Gastrocnemius medialis (tissue), 4 donors: ENCODE measurements at regions of chr7 and their contacts with region 1.

Region 1: GRCh38 chr7:150988230-150989226 is 2.3 kb upstream of the NOS3 start:
- DNase-seq: no peak
- ATAC-seq: peak; percentile 48 to 55
- H3K4me3 ChIP-seq: no peak overlapping the region
- H3K27ac ChIP-seq: peak overlapping the region in 3 of 4 donors; percentile 34 to 57 (median 35)
- H3K4me1 ChIP-seq: peaks cover 0 to 7% of the 10 kb centered on the region in 2 donors
- H3K27me3 ChIP-seq: peaks cover 0 to 3% (median 0%) of the 10 kb centered on the region in 3 donors
- CTCF ChIP-seq: peak; percentile 65 to 94 (median 83)
- POLR2A ChIP-seq: no peak

Region 2: DNA sequence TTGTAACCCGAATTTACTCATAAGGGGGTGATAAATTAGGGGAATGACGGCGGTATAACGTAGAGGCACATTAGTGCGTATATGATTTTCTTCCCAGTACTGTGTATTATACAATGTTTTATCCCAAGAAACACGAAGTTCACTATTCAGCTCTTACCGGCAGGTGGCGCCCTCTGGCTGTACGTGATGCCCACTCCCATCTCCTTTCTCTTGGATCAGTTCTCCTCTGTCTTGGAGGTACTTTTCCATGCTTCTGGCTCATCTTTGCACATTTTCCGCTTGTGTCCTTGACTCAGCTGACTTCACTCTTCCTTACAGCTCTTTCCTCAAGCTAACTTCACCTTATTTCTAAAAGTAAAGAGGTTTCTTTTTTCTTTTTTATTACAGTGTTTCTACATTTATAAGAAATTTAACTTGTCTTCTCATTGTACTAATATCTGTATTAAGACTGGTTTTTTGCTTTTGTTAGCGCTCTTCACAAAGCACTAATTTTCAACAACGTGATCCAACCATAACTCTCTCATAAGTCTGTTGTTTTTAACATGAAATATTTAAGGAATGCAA is 209.7 kb before region 1 on chr7:
- in situ Hi-C with region 1: loop called in 3 of 4 experiments (anchors 25 kb)
- intact Hi-C with region 1: loop called (anchors 10 kb)
- DNase-seq: peak in 1 of 2 donors; percentile 49
- ATAC-seq: peak; percentile 67 to 71
- H3K4me3 ChIP-seq: no peak overlapping the region
- H3K27ac ChIP-seq: no peak overlapping the region
- H3K4me1 ChIP-seq: no peaks in the 10 kb centered on the region
- H3K27me3 ChIP-seq: no peaks in the 10 kb centered on the region
- CTCF ChIP-seq: peak; percentile 31 to 76 (median 49)
- POLR2A ChIP-seq: no peak

Region 3: DNA sequence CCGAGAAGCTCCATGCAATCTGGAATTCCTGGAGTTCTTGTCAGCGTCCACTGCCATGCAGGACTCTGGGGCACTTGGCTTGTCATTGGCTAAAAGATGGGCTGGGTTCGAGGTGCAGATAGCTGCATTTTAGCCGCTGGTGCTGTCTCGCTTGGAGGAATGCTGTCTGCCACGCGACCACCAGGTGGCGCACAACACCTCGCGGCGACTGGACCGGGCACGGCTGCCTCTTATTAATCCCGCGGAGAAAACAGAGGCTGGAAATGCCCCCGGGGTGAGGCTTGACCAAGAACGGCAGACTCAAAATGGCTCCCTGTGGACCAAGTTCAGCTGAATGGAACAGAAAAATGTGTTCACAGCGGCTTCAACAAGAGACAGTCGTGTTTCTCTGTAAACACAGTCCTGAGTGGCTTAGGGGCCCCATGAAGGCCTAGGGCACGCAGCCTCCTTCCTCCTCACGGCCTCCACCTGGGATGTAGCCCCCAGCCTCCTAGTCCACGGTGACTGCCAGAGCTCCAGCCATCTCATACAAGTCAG is 90.0 kb before region 1 on chr7:
- in situ Hi-C with region 1: loop called (anchors 5 to 10 kb)
- intact Hi-C with region 1: loop called (anchors 1 kb)
- DNase-seq: peak; percentile 44 to 45
- ATAC-seq: peak; percentile 58 to 84
- H3K4me3 ChIP-seq: no peak overlapping the region
- H3K27ac ChIP-seq: no peak overlapping the region
- H3K4me1 ChIP-seq: peaks cover 0 to 5% of the 10 kb centered on the region in 2 donors
- H3K27me3 ChIP-seq: peaks cover 0 to 13% (median 6%) of the 10 kb centered on the region in 3 donors
- CTCF ChIP-seq: peak; percentile 78 to 94 (median 85)
- POLR2A ChIP-seq: no peak

Region 4: DNA sequence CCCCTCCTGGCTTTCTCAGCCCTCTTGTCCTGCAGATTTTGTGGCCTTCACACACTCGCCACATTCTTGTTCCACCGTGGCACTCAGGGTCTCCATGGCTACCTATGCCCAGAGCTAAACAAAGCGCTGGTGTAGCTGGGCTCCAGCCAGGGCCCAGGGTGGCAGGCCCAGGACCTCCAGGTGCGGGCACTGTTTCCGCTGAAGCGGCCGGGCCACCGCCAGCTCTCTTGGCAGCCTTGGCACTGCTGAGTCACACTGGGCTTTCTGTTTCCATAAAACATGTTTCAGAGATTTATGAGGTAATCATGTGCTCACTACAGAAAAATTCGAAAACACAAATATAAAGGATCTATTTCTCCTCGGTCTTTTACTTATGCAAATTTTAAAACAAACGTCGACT is 84.9 kb before region 1 on chr7:
- in situ Hi-C with region 1: loop called (anchors 5 to 10 kb)
- intact Hi-C with region 1: loop called (anchors 1 kb)
- DNase-seq: no peak
- ATAC-seq: no peak
- H3K4me3 ChIP-seq: no peak overlapping the region
- H3K27ac ChIP-seq: no peak overlapping the region
- H3K4me1 ChIP-seq: peaks cover 0 to 7% of the 10 kb centered on the region in 2 donors
- H3K27me3 ChIP-seq: peaks cover 0 to 7% (median 3%) of the 10 kb centered on the region in 3 donors
- CTCF ChIP-seq: no peak
- POLR2A ChIP-seq: no peak

Region 5: DNA sequence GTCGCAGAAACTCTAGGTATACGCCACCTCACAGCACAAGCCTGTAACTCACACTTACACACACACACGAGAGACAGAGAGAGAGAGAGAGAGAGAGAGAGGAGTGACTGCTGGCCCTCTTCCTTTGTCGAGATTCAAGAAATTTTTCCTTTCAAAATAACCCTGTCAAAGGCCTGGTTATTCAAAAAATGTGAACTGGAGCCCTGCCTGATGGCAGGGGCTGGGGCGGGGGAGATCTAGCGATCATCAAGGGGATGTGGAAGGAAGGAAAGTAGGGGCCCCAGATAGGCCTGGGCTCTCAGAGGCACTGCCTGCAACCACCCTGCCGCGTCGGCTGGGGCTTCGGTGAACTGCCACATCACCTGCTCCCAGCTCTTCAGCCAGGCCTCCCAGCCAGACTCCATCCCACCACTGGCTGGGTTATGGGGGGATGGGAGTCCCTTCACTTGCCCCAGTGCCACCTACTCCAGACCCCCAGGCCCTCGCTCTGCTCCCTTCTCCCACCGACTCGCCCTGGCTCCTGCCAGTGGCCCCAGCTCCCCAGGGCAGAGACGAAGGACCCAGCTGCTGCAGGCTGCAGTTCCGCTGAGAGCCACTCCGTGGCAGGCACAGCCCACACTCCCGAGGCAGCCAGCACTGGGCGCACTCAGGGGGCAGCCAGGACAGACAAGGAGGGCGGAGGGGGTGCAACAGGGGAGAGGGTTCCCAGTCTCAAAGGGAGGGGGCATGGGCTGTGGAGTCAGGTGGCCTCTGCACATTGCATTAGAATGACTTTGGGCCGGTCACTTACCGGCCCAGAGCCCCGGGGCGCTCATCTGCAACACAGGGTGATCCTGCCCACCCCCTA is 25.8 kb before region 1 on chr7:
- in situ Hi-C with region 1: no loop called
- intact Hi-C with region 1: loop called (anchors 1 kb)
- DNase-seq: no peak
- ATAC-seq: no peak
- H3K4me3 ChIP-seq: no peak overlapping the region
- H3K27ac ChIP-seq: no peak overlapping the region
- H3K4me1 ChIP-seq: peaks cover 1 to 6% of the 10 kb centered on the region in 2 donors
- H3K27me3 ChIP-seq: no peaks in the 10 kb centered on the region
- CTCF ChIP-seq: peak; percentile 10 to 76 (median 61)
- POLR2A ChIP-seq: no peak